ENCODE measurements at regions of chr13 and their contacts with region 1.

Region 1: DNA sequence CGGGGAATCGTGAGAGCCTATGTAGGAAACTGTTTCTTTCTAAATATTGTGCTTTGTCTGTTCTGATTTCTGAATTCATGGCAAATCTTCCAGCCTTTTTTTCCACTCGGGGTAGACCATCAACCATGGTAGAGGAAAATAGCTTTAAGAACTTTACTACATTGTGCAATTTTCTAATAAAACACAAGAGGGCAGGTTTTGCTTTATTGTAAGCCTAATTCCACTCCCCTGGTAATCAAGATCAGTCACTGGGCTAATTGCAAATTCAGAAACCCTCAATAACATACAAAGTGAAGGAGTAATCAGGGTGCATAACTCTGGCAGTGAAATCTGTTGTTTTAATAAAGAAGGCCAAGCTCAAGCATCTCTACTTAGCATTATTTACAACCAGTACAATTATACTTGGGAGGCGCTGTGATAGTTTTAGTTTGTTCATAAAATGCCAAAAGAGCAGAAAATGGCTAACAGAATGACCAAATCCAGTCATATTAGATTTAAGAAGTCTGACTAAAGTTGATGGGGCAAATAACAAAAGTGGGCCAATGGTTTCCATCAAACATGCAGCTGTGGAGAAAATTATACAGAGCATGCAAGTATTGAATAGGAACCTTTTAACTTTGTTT is 43.8 kb downstream of the DCT start:
- DNase-seq: no peak
- ATAC-seq: peak; percentile 65

Region 2: DNA sequence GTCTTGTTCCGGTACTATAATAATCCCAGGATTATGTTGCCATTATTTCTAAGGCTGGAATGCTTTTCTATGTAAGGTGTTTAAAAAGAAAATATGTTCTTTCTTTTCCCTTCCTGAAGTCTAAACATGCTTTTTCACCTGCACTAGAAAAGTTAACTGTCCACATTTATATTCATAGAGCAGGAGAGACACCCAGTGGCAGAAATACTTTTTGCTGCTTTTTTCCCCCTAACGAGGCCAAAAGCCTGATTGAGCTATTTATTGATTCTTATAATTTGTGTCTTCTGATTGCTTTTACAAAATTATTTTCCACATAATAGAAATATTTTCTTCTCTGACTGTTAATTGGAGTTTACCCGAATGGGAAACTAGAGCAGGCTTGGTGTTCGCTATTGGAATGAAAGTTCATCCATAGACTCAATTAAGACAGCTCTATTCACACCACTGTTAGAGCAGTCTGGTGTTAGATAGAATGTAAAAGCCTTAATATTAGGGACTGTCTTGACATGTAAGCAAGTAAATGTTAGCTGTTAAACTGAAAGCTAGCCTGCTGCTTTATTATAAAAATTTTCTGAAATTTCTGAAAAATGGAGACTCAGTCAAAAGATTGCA is 181.8 kb after region 1 on chr13:
- intact Hi-C with region 1: loop called (anchors 5 kb)
- DNase-seq: no peak
- ATAC-seq: peak; percentile 42

Region 3: DNA sequence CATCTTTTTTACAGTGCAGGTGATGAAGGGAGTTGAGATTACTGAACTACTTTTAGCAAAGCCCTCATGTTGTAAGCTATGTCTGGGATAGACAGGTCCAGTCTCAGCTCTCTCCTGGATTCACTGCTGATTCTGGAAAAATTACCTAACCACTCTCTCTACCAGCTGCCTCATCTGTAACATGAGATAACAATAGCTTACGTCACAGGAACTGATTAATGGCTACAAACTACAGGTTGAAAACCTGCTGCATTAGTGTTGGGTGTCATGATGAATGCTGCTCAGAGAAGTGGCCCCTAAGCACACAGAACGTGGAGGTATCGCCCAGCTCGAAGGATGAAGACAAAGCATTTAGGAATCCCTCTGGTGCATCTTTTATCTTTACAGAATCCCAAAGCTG is 587.7 kb after region 1 on chr13:
- intact Hi-C with region 1: no loop called
- DNase-seq: no peak
- ATAC-seq: no peak